Right ventricle myocardium superior (tissue), 1 donor: ENCODE measurements at regions of chr20 and their contacts with region 1.

Region 1: GRCh38 chr20:20083807-20084206 is 31.5 kb downstream of the CFAP61 start:
- DNase-seq: no peak
- ATAC-seq: peak; percentile 45

Region 2: GRCh38 chr20:20215976-20216727 is 132.3 kb after region 1 on chr20:
- intact Hi-C with region 1: loop called (anchors 5 kb)
- DNase-seq: peak; percentile 53
- ATAC-seq: peak; percentile 88

Region 3: DNA sequence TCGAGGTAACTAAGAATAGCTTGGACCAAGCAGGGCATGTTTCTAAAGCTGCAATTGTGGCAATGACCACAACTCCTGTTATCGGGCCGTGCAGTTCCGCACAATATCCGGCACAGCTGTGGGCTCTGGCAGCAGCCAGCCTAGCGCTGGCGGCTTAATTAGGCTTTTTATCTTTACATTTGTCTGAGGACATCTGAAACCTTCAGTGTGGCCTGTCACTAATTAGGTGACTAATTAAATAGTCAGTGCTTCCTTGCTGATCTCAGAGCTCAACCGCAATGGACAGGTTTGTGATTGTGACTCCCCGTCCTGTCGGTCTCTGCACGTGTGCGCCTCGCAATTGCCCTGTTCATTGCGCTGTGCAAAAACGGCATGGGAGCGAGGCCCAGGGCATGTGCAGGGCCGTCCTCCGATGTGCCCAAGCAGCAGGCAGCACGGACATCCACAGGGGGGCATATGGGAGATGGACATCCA is 149.3 kb after region 1 on chr20:
- intact Hi-C with region 1: loop called (anchors 5 kb)
- DNase-seq: no peak
- ATAC-seq: no peak

Region 4: GRCh38 chr20:20571068-20571780 is 487.4 kb after region 1 on chr20:
- intact Hi-C with region 1: loop called (anchors 5 kb)
- DNase-seq: no peak
- ATAC-seq: no peak